ENCODE measurements at regions of chr5 and their contacts with region 1.

Region 1: DNA sequence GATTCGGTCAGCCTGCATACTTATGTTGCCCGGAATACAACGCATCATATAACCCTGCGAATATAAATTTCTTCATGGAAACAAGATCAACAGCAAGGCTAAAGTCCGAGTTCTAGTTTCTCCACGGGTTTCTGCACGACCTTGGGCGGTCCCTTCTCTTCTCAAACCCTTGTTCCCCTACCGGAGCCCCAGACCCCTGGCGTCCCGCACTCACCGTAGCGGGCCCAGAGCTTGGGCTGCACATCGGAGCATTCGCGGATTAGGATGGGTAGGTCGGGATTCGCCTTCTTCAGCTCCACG is 438 bp downstream of the NDUFA2 start:
- DNase-seq: no peak
- ATAC-seq: peak; percentile 17 to 39

Region 2: DNA sequence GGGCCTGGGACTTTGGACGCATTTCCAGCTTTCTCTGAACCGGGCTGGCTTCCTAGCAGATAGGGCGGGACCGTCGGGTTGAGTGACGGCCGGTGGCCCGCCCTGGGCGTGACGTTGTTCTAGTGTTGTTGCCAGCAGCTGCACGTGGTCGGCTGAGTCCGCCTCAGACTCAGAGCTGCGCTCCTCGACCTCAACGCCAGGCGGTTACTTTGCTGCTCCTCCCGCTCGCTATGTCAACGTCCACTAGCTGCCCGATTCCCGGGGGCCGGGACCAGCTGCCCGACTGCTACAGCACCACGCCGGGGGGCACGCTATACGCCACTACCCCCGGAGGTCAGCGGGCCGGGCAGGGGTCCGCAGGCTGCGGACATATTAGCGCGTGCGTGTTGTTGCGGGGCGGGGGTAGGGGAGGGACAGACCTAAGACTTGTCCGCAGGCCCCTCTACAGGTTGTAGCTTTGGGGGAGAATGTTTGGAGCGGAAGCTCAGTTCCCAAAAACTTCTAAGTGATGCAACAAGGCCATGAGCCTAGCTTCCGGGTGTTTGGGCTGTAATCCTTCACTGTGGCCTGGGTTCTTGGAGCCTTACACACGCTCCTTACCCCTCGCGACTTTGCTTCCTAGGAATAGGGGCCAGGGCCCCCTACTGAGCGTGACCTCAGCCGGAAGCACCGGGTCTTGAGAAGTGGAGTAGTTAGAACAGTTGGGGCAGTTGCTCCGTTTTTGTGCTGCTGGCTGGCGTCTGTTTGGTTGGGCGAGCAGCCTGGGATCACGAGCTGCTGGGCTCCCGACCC is 99.3 kb before region 1 on chr5 and contains the start of gene EIF4EBP3:
- intact Hi-C with region 1: loop called in 1 of 2 experiments (anchors 5 kb)
- DNase-seq: peak; percentile 98
- ATAC-seq: peak; percentile 96 to 97
- total RNA-seq, gene EIF4EBP3: 8.8 to 11.5 TPM

Region 3: DNA sequence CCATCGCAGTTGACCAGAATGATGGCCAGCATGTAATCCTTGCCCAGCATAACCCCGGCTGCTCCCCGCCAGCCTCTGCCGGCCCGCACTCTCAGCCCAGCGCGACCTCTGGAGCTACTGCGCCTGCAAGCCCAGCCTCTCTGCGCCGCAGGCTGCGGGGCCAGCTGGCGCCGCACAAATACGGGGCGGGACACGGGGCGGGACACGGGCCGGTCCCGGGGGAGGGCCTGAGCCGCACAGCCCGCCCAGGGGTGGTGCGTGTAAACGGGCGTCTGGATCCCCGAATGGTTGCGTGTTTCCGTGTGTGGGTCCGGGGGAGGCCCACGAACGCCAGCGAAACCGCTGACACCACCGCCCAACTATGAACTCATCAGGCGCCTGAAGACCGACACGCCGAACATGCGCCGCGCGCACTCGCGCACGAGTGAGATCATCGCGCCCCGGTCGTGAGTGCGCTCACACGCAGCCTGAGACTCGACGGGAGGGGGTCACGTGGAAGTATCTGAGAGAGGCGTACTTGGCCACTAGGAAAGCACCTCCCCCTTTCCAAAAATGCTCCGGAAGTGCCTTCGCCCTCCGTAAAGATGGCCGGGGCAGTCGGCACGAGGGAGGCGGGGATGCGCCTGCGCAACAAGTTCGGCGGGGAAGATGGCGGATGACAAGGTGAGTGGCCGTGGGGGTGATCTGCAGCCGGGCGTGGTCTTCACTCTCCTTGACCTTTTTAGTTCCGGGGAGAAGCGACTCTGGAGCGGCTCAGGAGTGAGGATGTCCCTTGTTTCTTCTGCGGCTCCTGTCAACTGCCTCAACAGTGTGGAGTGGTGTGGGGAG is 82.6 kb before region 1 on chr5 and contains the starts of genes APBB3 and SLC35A4:
- intact Hi-C with region 1: loop called in 1 of 2 experiments (anchors 10 kb)
- DNase-seq: peak; percentile 98
- ATAC-seq: peak; percentile 94 to 95
- total RNA-seq, gene APBB3: 11.4 to 14.3 TPM
- total RNA-seq, gene SLC35A4: 70.3 to 79.3 TPM